Esophagus squamous epithelium (tissue), 5 donors: ENCODE measurements at regions of chr11 and their contacts with region 1.

Region 1: DNA sequence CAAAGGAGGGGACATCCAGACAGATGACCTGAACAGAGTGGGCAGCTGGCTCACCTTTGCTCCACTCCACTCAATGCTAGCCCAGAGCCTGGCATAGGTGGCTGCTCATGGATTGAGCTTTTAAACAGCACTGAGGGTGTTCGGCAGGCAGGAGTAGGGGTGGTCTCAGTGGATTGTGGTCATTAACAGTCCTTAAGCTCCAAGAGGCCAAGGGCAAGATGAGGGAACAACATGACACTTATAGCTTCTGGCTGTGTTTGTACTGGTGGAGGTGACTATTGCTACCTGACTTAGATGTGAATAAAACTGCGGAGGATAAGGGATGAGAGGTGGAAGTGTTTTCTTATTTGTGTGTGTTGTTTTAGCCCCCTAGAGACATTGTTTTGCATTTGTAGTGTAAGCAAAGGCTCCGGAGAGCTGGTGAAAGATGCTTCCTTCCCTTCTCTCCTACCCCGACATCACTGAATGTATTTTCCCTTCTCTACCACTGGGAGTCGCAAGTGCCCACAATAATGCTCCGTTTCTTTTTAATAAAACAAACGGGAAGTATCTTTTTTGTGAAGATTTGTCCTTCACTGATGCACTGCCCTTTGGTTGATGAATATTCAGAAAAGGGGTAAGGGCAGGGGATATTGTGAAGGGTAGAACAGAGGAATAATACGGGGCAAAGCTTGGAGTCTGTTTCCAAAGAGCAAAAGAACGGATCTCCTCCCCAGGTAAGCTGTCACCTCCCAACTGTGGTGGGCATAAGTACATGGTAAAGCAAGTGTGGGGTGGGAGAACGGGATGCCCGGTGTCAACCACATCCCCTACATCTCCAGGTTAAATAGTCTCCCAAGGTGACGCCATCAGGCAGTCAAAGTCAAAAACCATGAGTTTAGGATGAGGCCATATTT is 27.5 kb upstream of the MTNR1B start:
- DNase-seq: no peak
- H3K4me3 ChIP-seq: no peak overlapping the region
- H3K27ac ChIP-seq: no peak overlapping the region
- H3K4me1 ChIP-seq: no peaks in the 10 kb centered on the region
- H3K27me3 ChIP-seq: peaks cover 0 to 8% (median 0%) of the 10 kb centered on the region in 4 donors
- CTCF ChIP-seq: peak; percentile 40 to 75 (median 55)
- POLR2A ChIP-seq: no peak

Region 2: GRCh38 chr11:92978271-92979111 is 36.6 kb after region 1 on chr11:
- intact Hi-C with region 1: no loop called
- DNase-seq: no peak
- H3K4me3 ChIP-seq: no peak overlapping the region
- H3K27ac ChIP-seq: no peak overlapping the region
- H3K4me1 ChIP-seq: no peaks in the 10 kb centered on the region
- H3K27me3 ChIP-seq: no peaks in the 10 kb centered on the region
- CTCF ChIP-seq: no peak
- POLR2A ChIP-seq: no peak

Region 3: GRCh38 chr11:93225662-93226061 is 283.7 kb after region 1 on chr11:
- intact Hi-C with region 1: loop called (anchors 10 kb)
- DNase-seq: no peak
- H3K4me3 ChIP-seq: no peak overlapping the region
- H3K27ac ChIP-seq: no peak overlapping the region
- H3K4me1 ChIP-seq: peaks cover 0 to 4% (median 0%) of the 10 kb centered on the region in 3 donors
- H3K27me3 ChIP-seq: no peaks in the 10 kb centered on the region
- CTCF ChIP-seq: peak in 5 of 6 experiments; percentile 31 to 53 (median 39)
- POLR2A ChIP-seq: no peak